Heart right ventricle (tissue), 16 donors: ENCODE measurements at regions of chr16 and their contacts with region 1.

Region 1: GRCh38 chr16:23398987-23399805 is 53.8 kb downstream of the COG7 start:
- DNase-seq: peak; percentile 40 to 41
- ATAC-seq: peak in 7 of 8 donors; percentile 77 to 95 (median 88)
- H3K4me3 ChIP-seq: no peak overlapping the region
- H3K27ac ChIP-seq: peak overlapping the region in 7 of 10 donors; percentile 33 to 62 (median 53)
- H3K4me1 ChIP-seq: peaks cover 0 to 16% (median 3%) of the 10 kb centered on the region in 9 donors
- H3K27me3 ChIP-seq: no peaks in the 10 kb centered on the region
- CTCF ChIP-seq: peak in 5 of 9 donors; percentile 17 to 46 (median 23)

Region 2: DNA sequence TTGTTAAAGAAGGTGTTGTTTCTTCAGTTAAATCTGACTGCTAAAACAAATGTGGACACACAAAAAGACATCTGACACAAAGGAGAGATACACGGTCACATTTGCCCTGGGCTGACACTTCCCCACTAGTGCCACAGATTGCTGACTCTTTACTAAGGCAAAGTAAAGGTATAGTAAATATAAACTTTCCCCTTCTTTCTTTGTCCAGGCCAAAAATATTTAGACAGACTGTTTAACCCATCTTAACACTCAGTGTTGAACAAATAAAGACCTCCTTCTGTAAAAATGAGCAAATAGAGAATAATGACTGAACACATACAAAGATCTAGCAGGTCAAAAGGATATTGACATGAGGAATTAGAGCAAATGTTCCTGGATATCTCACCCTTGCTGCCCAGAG is 158.2 kb before region 1 on chr16:
- intact Hi-C with region 1: no loop called
- DNase-seq: no peak
- ATAC-seq: no peak
- H3K4me3 ChIP-seq: no peak overlapping the region
- H3K27ac ChIP-seq: no peak overlapping the region
- H3K4me1 ChIP-seq: peaks cover 0 to 9% (median 0%) of the 10 kb centered on the region in 9 donors
- H3K27me3 ChIP-seq: no peaks in the 10 kb centered on the region
- CTCF ChIP-seq: no peak

Region 3: DNA sequence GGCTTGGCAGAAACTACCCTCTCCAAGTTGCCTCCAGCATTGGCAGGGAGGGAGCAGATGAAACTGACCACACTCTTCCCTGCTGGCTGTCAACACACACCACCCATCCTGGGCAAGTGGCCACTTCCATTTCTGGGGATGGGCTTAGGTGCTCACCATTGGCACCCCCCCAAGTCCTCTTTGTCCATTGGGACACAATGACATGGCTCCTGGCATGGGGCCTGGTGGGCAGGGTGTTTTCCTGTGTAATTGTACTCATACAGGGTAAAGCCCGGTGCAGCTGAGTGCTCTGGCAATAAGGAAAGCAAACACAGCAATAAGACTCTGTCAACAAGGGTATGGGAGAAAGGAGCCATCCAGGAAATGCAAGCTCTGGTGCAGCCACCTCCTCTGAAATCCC is 74.5 kb before region 1 on chr16:
- intact Hi-C with region 1: loop called in 1 of 10 experiments (anchors 10 kb)
- DNase-seq: peak; percentile 47 to 72
- ATAC-seq: peak in 5 of 8 donors; percentile 41 to 90 (median 80)
- H3K4me3 ChIP-seq: no peak overlapping the region
- H3K27ac ChIP-seq: no peak overlapping the region
- H3K4me1 ChIP-seq: peaks cover 0 to 10% (median 3%) of the 10 kb centered on the region in 9 donors
- H3K27me3 ChIP-seq: peaks cover 0 to 14% (median 0%) of the 10 kb centered on the region in 7 donors
- CTCF ChIP-seq: no peak

Region 4: DNA sequence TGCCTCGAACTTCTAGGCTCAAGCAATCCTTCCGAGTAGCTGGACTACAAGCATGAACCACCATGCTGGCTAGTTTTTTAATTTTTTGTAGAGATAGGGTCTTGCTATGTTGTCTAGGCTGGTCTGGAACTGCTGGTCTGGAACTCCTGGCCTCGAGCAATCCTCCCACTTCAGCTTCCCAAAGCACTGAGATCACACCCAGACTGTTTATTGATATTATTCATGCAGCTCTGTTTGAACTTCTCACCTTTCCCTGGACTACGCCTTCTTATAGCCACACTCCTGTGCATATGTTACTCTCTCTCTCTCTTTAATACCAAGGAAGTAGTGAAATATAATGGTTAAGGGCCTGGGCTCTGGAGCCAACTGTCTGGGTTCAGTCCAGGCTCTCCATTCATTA is 49.2 kb after region 1 on chr16:
- intact Hi-C with region 1: no loop called
- DNase-seq: no peak
- ATAC-seq: no peak
- H3K4me3 ChIP-seq: no peak overlapping the region
- H3K27ac ChIP-seq: no peak overlapping the region
- H3K4me1 ChIP-seq: peaks cover 0 to 32% (median 14%) of the 10 kb centered on the region in 9 donors
- H3K27me3 ChIP-seq: no peaks in the 10 kb centered on the region
- CTCF ChIP-seq: no peak

Region 5: DNA sequence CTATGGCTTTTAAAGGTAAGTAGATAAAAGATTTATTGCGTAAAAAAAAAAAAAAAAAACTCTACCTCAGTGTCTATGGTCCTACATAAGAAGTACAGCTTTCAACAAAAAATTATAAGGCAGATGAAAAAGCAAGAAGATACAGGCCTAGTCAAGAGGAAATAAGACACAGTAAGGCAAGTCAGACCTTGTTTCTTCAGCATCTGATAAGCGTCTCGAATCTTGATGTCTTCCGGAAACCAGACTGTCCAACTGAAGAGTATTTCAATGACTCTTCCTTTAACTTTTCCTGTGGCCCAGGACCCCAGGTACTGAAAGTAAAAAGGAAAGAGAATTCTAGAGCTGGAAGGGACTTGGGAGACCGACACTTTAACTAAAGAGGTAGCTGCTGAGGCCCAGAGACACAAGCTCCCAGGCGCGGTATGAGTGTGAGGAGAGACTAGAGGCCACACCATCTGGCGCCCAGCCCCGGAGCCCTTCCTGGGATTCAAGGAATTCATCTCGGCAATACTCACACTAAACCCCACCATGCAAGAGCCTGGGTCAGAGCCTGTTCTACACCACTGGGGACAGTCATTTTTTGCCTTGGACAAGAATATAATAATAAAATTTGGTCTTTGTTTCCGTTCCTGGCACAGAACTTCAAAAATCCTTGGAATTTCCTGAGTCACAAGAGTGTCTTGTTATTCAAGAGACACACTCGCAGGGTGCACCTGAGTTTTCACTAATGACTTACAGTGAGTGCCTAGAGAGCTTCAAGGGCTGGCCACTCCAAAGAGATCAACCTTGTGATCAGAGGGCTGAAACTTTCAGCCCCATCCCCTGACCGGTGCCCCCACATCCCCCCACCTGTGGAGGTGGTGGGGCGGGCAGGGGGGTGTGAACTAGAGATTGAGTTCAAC is 92.5 kb after region 1 on chr16:
- intact Hi-C with region 1: no loop called
- DNase-seq: no peak
- ATAC-seq: peak in 3 of 8 donors; percentile 23 to 29 (median 29)
- H3K4me3 ChIP-seq: no peak overlapping the region
- H3K27ac ChIP-seq: peak overlapping the region in 4 of 10 donors; percentile 5 to 59 (median 32)
- H3K4me1 ChIP-seq: peaks cover 0 to 27% (median 9%) of the 10 kb centered on the region in 9 donors
- H3K27me3 ChIP-seq: no peaks in the 10 kb centered on the region
- CTCF ChIP-seq: no peak

Region 6: GRCh38 chr16:23510164-23510914 is 111.1 kb after region 1 on chr16 and contains the start of gene GGA2:
- intact Hi-C with region 1: no loop called
- DNase-seq: peak; percentile 80 to 86
- ATAC-seq: peak; percentile 92 to 97 (median 94)
- H3K4me3 ChIP-seq: peak within 1 kb of the TSS; percentile 66 to 92 (median 85)
- H3K27ac ChIP-seq: peak within 1 kb of the TSS; percentile 28 to 94 (median 86)
- H3K4me1 ChIP-seq: peaks cover 5 to 41% (median 27%) of the 10 kb centered on the region in 9 donors
- H3K27me3 ChIP-seq: no peaks in the 10 kb centered on the region
- CTCF ChIP-seq: peak in 4 of 9 donors; percentile 8 to 32 (median 26)
- total RNA-seq, gene GGA2: 32.6 to 52.9 (median 40.6) TPM